AG04450 (cell line): ENCODE measurements at regions of chr3 and their contacts with region 1.

Region 1: DNA sequence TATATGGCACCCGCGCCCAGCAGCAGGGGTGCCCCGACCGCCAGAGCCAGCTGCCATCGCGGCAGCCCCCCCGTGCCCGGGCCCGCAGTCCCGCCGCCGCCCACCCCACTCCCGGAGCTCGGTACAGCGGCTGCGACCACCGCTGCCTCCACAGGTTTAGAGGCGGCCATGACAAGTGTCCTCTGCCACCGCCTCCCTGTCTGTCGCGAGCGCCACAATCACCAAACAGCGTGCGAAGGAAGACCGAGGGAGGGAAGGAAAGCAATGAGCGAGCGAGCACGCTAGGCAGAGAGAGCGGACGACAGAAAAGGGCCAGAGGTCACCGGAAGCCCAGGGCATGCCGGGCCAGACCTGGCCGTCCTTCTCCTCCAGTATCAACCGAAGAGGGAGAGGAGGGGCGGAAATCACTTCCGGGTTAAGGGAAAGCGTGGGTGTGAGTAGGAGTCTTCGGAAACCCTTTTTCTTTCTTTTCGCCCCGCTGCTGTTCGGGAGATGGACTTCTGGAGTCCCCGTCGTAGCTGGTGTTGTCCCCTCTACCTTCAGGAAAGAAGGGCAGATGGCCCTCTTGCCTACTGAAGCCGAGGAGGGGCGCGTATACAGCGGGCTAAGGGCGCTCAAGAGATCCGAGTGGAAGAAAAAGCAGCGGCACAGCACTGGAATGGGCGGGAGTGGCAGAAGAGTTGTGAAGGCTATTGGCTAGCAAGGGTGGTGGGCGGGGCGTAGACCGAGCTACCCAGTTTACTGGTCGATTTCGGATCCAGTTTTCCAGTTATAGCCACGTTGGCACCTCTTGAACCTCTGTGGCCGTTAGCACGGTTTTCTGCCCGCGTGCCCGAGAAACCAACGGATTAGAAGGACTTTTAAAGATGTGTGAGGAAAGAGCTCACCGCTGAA is at the starts of genes LNP1 and TOMM70:
- DNase-seq: peak; percentile 89
- H3K4me3 ChIP-seq: peak within 1 kb of the TSS; percentile 92
- H3K27ac ChIP-seq: peak within 1 kb of the TSS; percentile 98
- H3K27me3 ChIP-seq: no peaks in the 10 kb centered on the region
- CTCF ChIP-seq: no peak
- polyA plus RNA-seq, gene LNP1: 2.7 and 3.3 TPM in 2 replicates
- polyA plus RNA-seq, gene TOMM70: 40.1 and 53.7 TPM in 2 replicates

Region 2: DNA sequence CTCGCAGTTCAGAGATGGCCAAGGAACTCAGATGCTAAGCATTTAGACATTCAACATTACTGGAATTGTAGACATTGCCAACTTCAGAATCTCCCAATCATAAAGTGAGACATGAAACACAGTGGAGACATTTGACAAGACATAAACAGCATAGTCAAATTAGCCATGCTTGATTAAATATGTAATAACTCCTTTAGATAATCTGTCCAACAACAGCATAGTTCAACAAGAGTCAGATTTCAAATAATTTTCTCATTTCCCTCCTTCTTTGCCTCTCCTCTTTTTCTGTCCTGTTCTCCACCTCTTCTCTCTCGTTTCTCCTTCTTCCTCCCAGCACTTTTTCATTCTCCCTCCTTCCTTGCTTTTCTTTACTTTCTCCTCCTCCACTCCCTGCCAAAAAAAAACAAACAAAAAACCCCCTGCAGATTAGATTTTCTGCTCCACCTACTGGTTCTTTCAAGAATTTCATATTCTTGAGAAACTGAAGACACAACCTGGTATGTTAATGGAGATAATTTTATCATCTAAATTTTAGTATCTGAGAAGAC is 1827.8 kb before region 1 on chr3:
- CTCF ChIA-PET with region 1: no interaction called
- POLR2A ChIA-PET with region 1: no interaction called
- DNase-seq: no peak
- H3K4me3 ChIP-seq: no peak overlapping the region
- H3K27ac ChIP-seq: no peak overlapping the region
- H3K27me3 ChIP-seq: no peaks in the 10 kb centered on the region
- CTCF ChIP-seq: peak; percentile 62

Region 3: GRCh38 chr3:100386437-100387074 is 14.5 kb before region 1 on chr3:
- CTCF ChIA-PET with region 1: interaction called, 4 read pairs
- POLR2A ChIA-PET with region 1: interaction called, 39 read pairs
- DNase-seq: no peak
- H3K4me3 ChIP-seq: no peak overlapping the region
- H3K27ac ChIP-seq: no peak overlapping the region
- H3K27me3 ChIP-seq: no peaks in the 10 kb centered on the region
- CTCF ChIP-seq: no peak